ENCODE measurements at regions of chr5 and their contacts with region 1.

Region 1: GRCh38 chr5:151141535-151141934 is 16.0 kb downstream of the ANXA6 start:
- DNase-seq: peak in 13 of 14 experiments; percentile 34 to 82 (median 50)
- ATAC-seq: peak; percentile 79
- H3K4me3 ChIP-seq: peak overlapping the region; percentile 24
- H3K4me3 Mint-ChIP-seq: peak overlapping the region; percentile 80
- H3K27ac ChIP-seq: peak overlapping the region; percentile 49 to 54
- H3K27ac Mint-ChIP-seq: peak overlapping the region; percentile 91
- H3K4me1 ChIP-seq: peaks cover 95% of the 10 kb centered on the region
- H3K4me1 Mint-ChIP-seq: peaks cover 94% of the 10 kb centered on the region
- H3K27me3 ChIP-seq: no peaks in the 10 kb centered on the region
- H3K27me3 Mint-ChIP-seq: no peaks in the 10 kb centered on the region
- CTCF ChIP-seq: no peak

Region 2: DNA sequence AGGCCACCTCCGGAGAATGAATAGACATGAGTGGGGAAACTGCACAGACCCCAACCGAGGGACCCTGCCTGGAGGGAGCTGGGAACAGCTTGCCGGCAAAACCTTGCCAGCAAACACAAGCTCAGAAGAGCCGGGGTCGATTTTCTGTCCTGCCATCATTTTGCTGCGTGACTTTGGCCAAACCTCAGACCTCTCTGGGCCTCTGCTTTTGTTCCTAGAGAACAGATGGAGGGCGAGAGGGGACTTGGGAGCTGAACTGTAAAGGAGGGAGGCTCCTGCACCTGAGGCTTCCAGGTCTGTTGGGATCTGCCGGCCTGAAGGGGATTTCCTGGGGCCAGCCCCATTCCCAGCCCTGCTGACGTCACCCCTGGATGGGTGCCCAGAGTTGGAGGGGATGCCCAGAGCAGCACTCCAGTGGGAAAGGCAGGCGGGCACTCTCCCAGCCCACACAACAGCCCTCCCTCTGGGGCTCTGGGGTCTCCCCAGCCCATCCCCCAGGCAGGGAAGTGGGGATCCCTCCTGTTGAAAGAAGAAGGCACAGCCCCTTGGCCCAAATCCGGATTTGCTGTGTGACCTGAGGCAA is 541.5 kb before region 1 on chr5:
- CTCF ChIA-PET with region 1: no interaction called
- POLR2A ChIA-PET with region 1: no interaction called
- intact Hi-C with region 1: no loop called
- DNase-seq: no peak
- ATAC-seq: no peak
- H3K4me3 ChIP-seq: no peak overlapping the region
- H3K4me3 Mint-ChIP-seq: no peak overlapping the region
- H3K27ac ChIP-seq: no peak overlapping the region
- H3K27ac Mint-ChIP-seq: no peak overlapping the region
- H3K4me1 ChIP-seq: no peaks in the 10 kb centered on the region
- H3K4me1 Mint-ChIP-seq: no peaks in the 10 kb centered on the region
- H3K27me3 ChIP-seq: no peaks in the 10 kb centered on the region
- H3K27me3 Mint-ChIP-seq: peaks cover 4% of the 10 kb centered on the region
- CTCF ChIP-seq: no peak

Region 3: DNA sequence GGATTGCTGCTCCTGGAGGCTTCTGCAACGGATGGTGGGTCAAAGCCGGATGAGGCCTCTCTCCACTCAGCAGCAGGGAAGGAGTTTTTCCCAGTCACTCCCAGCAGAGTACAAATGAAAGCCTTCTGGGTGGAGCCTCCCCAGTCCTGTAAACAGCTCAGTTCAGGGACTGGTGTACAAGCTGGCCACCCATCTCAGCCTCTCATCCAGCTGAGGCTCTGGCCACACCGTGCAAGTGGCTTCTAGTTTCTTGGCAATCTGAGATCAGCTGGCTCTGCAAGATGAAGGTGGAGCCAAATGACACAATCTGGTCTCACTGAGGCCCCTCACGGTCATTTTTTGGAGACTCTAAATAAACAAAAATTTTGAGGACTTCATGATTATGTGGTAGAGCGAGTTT is 111.1 kb before region 1 on chr5:
- CTCF ChIA-PET with region 1: no interaction called
- POLR2A ChIA-PET with region 1: no interaction called
- intact Hi-C with region 1: no loop called
- DNase-seq: no peak
- ATAC-seq: no peak
- H3K4me3 ChIP-seq: no peak overlapping the region
- H3K4me3 Mint-ChIP-seq: no peak overlapping the region
- H3K27ac ChIP-seq: no peak overlapping the region
- H3K27ac Mint-ChIP-seq: no peak overlapping the region
- H3K4me1 ChIP-seq: no peaks in the 10 kb centered on the region
- H3K4me1 Mint-ChIP-seq: no peaks in the 10 kb centered on the region
- H3K27me3 ChIP-seq: no peaks in the 10 kb centered on the region
- H3K27me3 Mint-ChIP-seq: no peaks in the 10 kb centered on the region
- CTCF ChIP-seq: no peak

Region 4: DNA sequence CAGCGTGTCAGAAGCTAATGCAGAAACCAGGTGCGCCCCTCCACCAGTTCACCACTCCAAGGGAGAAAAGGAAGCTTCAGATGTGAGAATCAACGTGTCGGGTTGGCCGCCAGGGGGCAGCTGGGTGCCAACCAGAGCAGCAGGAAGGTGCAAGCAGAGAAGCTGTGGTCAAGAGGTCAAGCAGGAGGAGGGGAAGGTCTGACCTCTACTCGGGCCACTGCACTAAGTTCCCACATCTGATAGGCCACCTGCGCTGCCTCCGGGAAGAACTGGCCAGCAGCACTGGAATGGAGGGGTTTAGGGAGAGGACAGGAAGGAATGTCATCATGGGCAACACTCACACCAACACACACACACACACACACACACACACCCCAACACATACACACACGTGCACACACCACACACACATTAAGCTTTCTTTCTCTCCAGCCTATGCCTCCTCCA is 15.3 kb before region 1 on chr5:
- CTCF ChIA-PET with region 1: interaction called, 21 read pairs
- POLR2A ChIA-PET with region 1: interaction called, 17 read pairs
- intact Hi-C with region 1: loop called in 1 of 2 experiments (anchors 2 kb)
- DNase-seq: peak; percentile 42 to 84 (median 62)
- ATAC-seq: peak; percentile 61
- H3K4me3 ChIP-seq: no peak overlapping the region
- H3K4me3 Mint-ChIP-seq: no peak overlapping the region
- H3K27ac ChIP-seq: peak overlapping the region in 1 of 2 donors; percentile 50
- H3K27ac Mint-ChIP-seq: peak overlapping the region; percentile 91
- H3K4me1 ChIP-seq: peaks cover 53% of the 10 kb centered on the region
- H3K4me1 Mint-ChIP-seq: peaks cover 71% of the 10 kb centered on the region
- H3K27me3 ChIP-seq: no peaks in the 10 kb centered on the region
- H3K27me3 Mint-ChIP-seq: no peaks in the 10 kb centered on the region
- CTCF ChIP-seq: peak; percentile 90

Region 5: GRCh38 chr5:151202381-151203139 is 61.0 kb after region 1 on chr5:
- CTCF ChIA-PET with region 1: no interaction called
- POLR2A ChIA-PET with region 1: no interaction called
- intact Hi-C with region 1: no loop called
- DNase-seq: peak in 6 of 14 experiments; percentile 4 to 76 (median 58)
- ATAC-seq: peak; percentile 74
- H3K4me3 ChIP-seq: no peak overlapping the region
- H3K4me3 Mint-ChIP-seq: peak overlapping the region; percentile 68
- H3K27ac ChIP-seq: peak overlapping the region; percentile 38 to 49
- H3K27ac Mint-ChIP-seq: peak overlapping the region; percentile 90
- H3K4me1 ChIP-seq: peaks cover 41% of the 10 kb centered on the region
- H3K4me1 Mint-ChIP-seq: peaks cover 56% of the 10 kb centered on the region
- H3K27me3 ChIP-seq: no peaks in the 10 kb centered on the region
- H3K27me3 Mint-ChIP-seq: no peaks in the 10 kb centered on the region
- CTCF ChIP-seq: no peak

Measured in CD4-positive, alpha-beta T cell (primary cell).